ENCODE measurements at regions of chr18 and their contacts with region 1.

Region 1: GRCh38 chr18:54828281-54828881 is at the start of gene RAB27B:
- DNase-seq: peak; percentile 78
- H3K4me3 ChIP-seq: peak within 1 kb of the TSS; percentile 3 to 51 (median 25)
- H3K27ac ChIP-seq: no peak within 1 kb of the TSS
- H3K4me1 ChIP-seq: peaks cover 9% of the 10 kb centered on the region
- H3K27me3 ChIP-seq: peaks cover 0 to 5% of the 10 kb centered on the region in 2 experiments
- CTCF ChIP-seq: no peak
- POLR2A ChIP-seq: no peak
- total RNA-seq, gene RAB27B: 0.09 TPM in 1 of 2 replicates, not detected in the other

Region 2: GRCh38 chr18:54585743-54586142 is 242.6 kb before region 1 on chr18:
- CTCF ChIA-PET with region 1: no interaction called
- POLR2A ChIA-PET with region 1: no interaction called
- dilution Hi-C with region 1: no loop called
- intact Hi-C with region 1: no loop called
- DNase-seq: no peak
- H3K4me3 ChIP-seq: no peak overlapping the region
- H3K27ac ChIP-seq: no peak overlapping the region
- H3K4me1 ChIP-seq: no peaks in the 10 kb centered on the region
- H3K27me3 ChIP-seq: peaks cover 0 to 2% of the 10 kb centered on the region in 2 experiments
- CTCF ChIP-seq: no peak
- POLR2A ChIP-seq: no peak

Region 3: GRCh38 chr18:54805571-54806334 is 22.6 kb before region 1 on chr18:
- CTCF ChIA-PET with region 1: interaction called, 4 read pairs
- POLR2A ChIA-PET with region 1: no interaction called
- dilution Hi-C with region 1: no loop called
- intact Hi-C with region 1: loop called (anchors 2 kb)
- DNase-seq: peak; percentile 90
- H3K4me3 ChIP-seq: no peak overlapping the region
- H3K27ac ChIP-seq: peak overlapping the region; percentile 55
- H3K4me1 ChIP-seq: peaks cover 11% of the 10 kb centered on the region
- H3K27me3 ChIP-seq: no peaks in the 10 kb centered on the region
- CTCF ChIP-seq: no peak
- POLR2A ChIP-seq: peak; percentile 25

Region 4: DNA sequence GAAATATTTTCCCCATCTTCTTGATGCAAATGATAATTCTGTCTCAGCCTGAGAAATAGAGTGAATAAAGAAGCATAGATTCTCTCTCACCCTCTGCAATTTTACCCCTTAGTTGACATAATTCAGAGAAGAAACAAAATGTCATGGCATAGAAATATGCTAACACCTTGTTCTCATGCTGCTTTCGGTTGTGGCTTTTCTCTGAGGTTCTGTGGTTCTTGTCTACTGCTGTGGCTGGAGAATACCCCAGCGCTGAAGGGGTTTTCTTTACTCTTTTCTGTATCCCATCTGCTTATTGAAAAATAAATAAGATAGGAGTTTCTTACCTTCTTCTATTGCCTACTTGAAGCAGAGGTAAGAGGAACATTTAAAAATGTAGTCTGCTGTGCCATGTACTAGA is 15.5 kb before region 1 on chr18:
- CTCF ChIA-PET with region 1: interaction called, 3 read pairs
- POLR2A ChIA-PET with region 1: no interaction called
- dilution Hi-C with region 1: no loop called
- intact Hi-C with region 1: loop called (anchors 1 kb)
- DNase-seq: no peak
- H3K4me3 ChIP-seq: no peak overlapping the region
- H3K27ac ChIP-seq: no peak overlapping the region
- H3K4me1 ChIP-seq: no peaks in the 10 kb centered on the region
- H3K27me3 ChIP-seq: no peaks in the 10 kb centered on the region
- CTCF ChIP-seq: no peak
- POLR2A ChIP-seq: no peak

Region 5: GRCh38 chr18:54983041-54983686 is 154.8 kb after region 1 on chr18:
- CTCF ChIA-PET with region 1: interaction called, 4 read pairs
- POLR2A ChIA-PET with region 1: no interaction called
- dilution Hi-C with region 1: no loop called
- intact Hi-C with region 1: loop called (anchors 10 kb)
- DNase-seq: peak; percentile 59
- H3K4me3 ChIP-seq: no peak overlapping the region
- H3K27ac ChIP-seq: no peak overlapping the region
- H3K4me1 ChIP-seq: no peaks in the 10 kb centered on the region
- H3K27me3 ChIP-seq: no peaks in the 10 kb centered on the region
- CTCF ChIP-seq: peak; percentile 33 to 41
- POLR2A ChIP-seq: no peak

Region 6: DNA sequence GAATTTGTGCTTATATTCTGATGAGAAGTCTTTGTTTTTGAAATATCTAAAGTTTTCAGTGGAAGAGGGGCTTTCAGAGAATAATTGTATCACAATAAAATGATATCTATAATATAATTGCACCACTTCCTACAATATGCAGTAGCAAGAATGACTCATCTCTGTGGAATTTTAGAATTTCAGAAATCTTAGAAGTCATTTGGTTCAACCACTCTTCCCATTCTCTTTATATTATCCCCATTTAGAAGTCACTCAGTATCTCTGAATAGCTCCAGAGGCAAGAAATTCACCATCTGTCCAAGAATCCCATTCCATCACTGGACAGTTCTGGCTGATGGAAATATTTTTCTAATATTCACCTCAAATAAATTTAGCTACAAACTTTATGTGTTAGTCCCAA is 190.2 kb after region 1 on chr18:
- CTCF ChIA-PET with region 1: no interaction called
- POLR2A ChIA-PET with region 1: no interaction called
- dilution Hi-C with region 1: no loop called
- intact Hi-C with region 1: no loop called
- DNase-seq: peak; percentile 38
- H3K4me3 ChIP-seq: no peak overlapping the region
- H3K27ac ChIP-seq: peak overlapping the region; percentile 16
- H3K4me1 ChIP-seq: peaks cover 6% of the 10 kb centered on the region
- H3K27me3 ChIP-seq: no peaks in the 10 kb centered on the region
- CTCF ChIP-seq: no peak
- POLR2A ChIP-seq: no peak

Region 7: GRCh38 chr18:55069497-55069896 is 241.1 kb after region 1 on chr18:
- CTCF ChIA-PET with region 1: no interaction called
- POLR2A ChIA-PET with region 1: no interaction called
- dilution Hi-C with region 1: no loop called
- intact Hi-C with region 1: no loop called
- DNase-seq: no peak
- H3K4me3 ChIP-seq: no peak overlapping the region
- H3K27ac ChIP-seq: no peak overlapping the region
- H3K4me1 ChIP-seq: no peaks in the 10 kb centered on the region
- H3K27me3 ChIP-seq: peaks cover 1 to 18% of the 10 kb centered on the region in 2 experiments
- CTCF ChIP-seq: no peak
- POLR2A ChIP-seq: no peak

Measured in endothelial cell of umbilical vein (primary cell).